K562 (cell line): ENCODE measurements at regions of chr21 and their contacts with region 1.

Region 1: DNA sequence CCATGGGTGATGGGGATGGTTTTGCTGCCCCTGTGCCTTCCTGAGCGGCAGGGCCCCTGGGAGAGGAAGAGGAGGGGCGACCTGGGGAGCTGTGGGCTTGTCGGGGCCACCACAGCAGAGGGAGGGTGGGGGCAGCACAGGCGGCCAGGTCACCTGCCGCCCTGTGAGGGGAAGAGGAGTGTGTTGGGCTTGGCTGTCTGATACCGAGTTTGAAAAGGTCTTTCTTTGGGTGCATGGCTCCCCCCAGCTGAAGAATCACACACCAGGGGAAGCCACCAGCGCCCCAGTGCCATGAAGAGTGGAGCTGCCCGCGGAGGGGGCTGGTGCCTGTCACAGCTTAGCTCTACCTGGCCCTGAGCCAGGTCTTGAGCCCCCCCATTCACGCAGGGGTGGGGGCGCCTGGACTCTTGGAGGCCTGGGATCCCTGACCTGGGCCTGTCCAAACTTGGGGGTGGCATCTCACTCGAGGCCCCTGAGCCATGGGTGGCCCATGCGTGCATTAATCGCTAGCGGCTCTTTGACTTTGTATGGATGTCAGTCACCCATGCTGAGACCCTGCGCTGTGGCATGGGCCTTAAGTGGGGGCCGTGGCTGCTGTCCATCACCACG is 26.4 kb downstream of the CSTB start:
- DNase-seq: no peak
- ATAC-seq: no peak
- H3K4me3 ChIP-seq: no peak overlapping the region
- H3K27ac ChIP-seq: no peak overlapping the region
- H3K4me1 ChIP-seq: peaks cover 7 to 36% of the 10 kb centered on the region in 2 experiments; a peak in 4 of 5 replicates
- H3K27me3 ChIP-seq: no peaks in the 10 kb centered on the region
- CTCF ChIP-seq: no peak
- EP300 ChIP-seq: no peak
- POLR2A ChIP-seq: no peak
- RAD21 ChIP-seq: no peak

Region 2: GRCh38 chr21:43736224-43736883 is 13.4 kb before region 1 on chr21:
- CTCF ChIA-PET with region 1: no interaction called
- POLR2A ChIA-PET with region 1: interaction called, 19 read pairs
- in situ Hi-C with region 1: no loop called
- intact Hi-C with region 1: no loop called
- DNase-seq: no peak
- ATAC-seq: no peak
- H3K4me3 ChIP-seq: no peak overlapping the region
- H3K27ac ChIP-seq: no peak overlapping the region
- H3K4me1 ChIP-seq: peaks cover 19 to 72% of the 10 kb centered on the region in 2 experiments
- H3K27me3 ChIP-seq: no peaks in the 10 kb centered on the region
- CTCF ChIP-seq: no peak
- EP300 ChIP-seq: no peak
- POLR2A ChIP-seq: no peak
- RAD21 ChIP-seq: no peak